ENCODE measurements at regions of chr22 and their contacts with region 1.

Region 1: DNA sequence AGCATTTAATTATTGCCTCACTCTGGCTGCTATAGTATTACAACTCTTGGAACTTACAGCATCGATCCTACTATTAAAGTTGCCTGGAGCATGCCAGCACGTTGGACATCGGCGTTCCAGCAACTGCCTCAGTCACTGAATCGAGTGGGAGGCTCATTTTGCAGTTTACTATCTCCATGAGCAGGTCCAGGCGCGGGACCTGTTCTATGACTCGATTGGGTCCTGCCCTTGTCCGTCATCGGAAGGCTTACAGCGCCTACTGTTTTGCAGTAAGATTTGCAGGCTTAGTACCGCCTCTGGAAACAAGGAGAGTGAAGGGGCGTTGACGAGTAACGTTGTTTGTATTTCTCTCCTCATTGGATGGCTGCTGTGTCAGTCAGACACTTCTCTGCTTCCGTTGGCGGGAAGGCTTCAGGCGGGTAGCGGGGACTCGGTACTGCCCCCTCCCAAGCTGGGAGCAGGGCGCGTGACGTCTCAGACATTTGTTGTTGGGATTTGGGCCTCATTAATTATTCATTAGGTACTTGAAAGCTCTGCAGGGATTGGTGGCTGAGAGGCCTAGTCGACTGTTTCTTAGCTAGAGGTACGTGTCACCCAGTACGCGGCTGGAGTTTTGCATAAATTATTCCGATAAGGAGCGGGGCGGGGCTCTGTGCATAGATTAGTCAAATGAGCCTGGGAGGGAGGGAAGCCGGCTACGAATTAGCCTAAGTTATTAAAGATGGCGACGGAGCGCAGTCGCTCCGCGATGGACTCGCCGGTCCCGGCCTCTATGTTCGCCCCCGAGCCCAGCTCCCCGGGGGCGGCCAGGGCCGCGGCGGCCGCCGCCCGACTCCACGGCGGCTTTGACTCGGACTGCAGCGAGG is at the start of gene GTPBP1:
- DNase-seq: peak; percentile 82
- ATAC-seq: peak; percentile 79
- H3K4me3 Mint-ChIP-seq: peak within 1 kb of the TSS; percentile 88
- H3K27ac Mint-ChIP-seq: peak within 1 kb of the TSS; percentile 85
- H3K4me1 Mint-ChIP-seq: peaks cover 69% of the 10 kb centered on the region
- H3K27me3 Mint-ChIP-seq: no peaks in the 10 kb centered on the region
- CTCF ChIP-seq: no peak
- total RNA-seq, gene GTPBP1: 90.6 and 103 TPM in 2 replicates

Region 2: DNA sequence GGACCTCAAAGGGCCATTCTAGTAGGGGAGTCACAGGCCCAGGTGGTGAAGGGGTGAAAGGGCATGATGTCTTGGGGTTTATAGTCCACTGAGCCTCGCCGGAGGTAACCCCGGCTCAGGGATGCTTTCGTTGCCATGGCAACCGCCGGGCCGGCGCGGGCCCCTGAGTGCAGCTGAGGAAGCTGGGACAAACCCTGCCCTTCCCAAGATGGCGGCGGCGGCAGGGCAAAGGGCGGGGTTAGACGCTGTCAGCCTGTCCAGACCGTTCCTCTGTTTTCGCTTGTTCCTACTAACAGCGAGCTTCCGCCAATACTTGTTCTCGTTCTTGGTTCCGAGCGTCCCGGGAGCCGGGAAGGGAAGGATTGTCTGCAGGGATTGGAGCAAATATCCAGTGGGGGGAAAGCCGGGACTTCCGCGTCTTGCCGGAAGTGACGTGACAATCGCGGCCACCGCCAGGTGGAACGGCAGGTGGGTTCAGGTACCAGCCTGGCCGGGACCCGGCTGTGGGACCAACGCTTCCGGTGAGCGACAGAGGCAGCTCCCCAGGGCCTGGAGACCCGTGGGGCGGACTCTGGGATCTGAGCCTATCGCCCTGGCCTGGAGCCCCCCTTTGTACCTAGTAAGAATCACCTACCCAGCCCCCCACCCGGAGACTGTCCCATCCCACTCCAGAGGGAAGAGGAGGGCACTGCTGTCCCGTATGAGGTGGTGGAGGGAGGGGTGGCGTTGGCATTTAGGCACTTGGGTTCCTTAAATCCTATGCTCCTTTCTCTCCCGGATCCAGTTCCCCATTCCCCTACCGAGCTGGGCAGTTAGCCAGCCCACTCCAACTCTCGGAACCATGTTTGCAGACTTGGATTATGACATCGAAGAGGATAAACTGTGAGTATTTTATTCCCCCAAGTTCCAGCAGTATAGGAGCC is 648.2 kb before region 1 on chr22 and contains the start of gene PICK1:
- CTCF ChIA-PET with region 1: interaction called, 3 read pairs
- POLR2A ChIA-PET with region 1: no interaction called
- intact Hi-C with region 1: loop called (anchors 1 kb)
- DNase-seq: peak; percentile 75
- ATAC-seq: peak; percentile 78
- H3K4me3 Mint-ChIP-seq: peak within 1 kb of the TSS; percentile 98
- H3K27ac Mint-ChIP-seq: peak within 1 kb of the TSS; percentile 97
- H3K4me1 Mint-ChIP-seq: peaks cover 19% of the 10 kb centered on the region
- H3K27me3 Mint-ChIP-seq: peaks cover 7% of the 10 kb centered on the region
- CTCF ChIP-seq: no peak
- total RNA-seq, gene PICK1: 21.5 and 25.5 TPM in 2 replicates

Region 3: DNA sequence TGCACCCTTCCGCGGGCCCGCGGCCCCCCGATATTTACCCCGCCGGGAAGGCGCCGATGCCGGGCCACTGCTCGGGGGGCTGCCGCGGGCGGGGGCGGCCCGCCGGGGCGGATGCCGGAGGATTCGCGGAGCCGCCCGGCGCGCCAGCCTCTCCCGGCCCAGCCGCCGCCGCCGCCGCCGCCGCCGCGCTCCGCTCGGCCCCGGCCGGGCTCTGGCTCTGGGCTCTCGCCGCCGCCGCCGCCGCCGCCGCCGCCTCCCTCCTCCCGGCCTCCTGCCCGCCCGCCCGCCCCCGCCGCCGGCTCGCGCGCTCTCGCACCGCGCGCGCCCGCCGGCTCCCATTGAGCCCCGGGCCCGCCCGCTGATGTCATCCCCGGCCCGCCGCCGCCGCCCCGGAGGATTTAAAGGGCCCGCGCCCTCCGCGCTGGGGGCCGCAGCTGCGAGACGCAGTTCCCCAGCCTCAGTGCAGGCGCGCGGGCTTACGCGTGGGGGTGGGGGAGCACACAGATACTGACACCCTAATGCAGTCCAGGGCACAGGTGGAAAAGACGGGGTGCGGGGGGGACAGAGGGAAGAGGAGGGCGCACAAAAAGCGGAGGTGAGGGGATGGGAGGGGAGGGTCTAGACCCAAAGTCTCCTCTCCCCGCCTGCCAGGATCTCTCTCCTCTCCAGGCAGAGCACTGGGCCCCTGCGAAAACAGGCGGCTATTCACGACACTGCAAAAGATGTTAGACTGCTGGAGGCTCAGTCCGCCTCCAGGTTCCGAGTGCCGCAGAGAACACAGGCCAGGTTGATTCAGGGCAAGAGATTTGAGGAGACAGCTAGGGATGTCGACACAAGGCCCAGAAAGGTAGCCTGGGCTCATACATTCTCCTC is 388.1 kb before region 1 on chr22 and contains the start of gene CSNK1E:
- CTCF ChIA-PET with region 1: no interaction called
- POLR2A ChIA-PET with region 1: no interaction called
- intact Hi-C with region 1: loop called (anchors 5 kb)
- DNase-seq: peak; percentile 72
- ATAC-seq: peak; percentile 58
- H3K4me3 Mint-ChIP-seq: peak within 1 kb of the TSS; percentile 82
- H3K27ac Mint-ChIP-seq: peak within 1 kb of the TSS; percentile 88
- H3K4me1 Mint-ChIP-seq: peaks cover 50% of the 10 kb centered on the region
- H3K27me3 Mint-ChIP-seq: no peaks in the 10 kb centered on the region
- CTCF ChIP-seq: no peak
- total RNA-seq, gene CSNK1E: 80.6 and 85.2 TPM in 2 replicates

Region 4: GRCh38 chr22:38506118-38506962 is 199.1 kb before region 1 on chr22 and contains the start of gene DDX17:
- CTCF ChIA-PET with region 1: no interaction called
- POLR2A ChIA-PET with region 1: no interaction called
- intact Hi-C with region 1: loop called (anchors 2 kb)
- DNase-seq: peak; percentile 91
- ATAC-seq: peak; percentile 89
- H3K4me3 Mint-ChIP-seq: peak within 1 kb of the TSS; percentile 99
- H3K27ac Mint-ChIP-seq: peak within 1 kb of the TSS; percentile 100
- H3K4me1 Mint-ChIP-seq: peaks cover 41% of the 10 kb centered on the region
- H3K27me3 Mint-ChIP-seq: no peaks in the 10 kb centered on the region
- CTCF ChIP-seq: no peak
- total RNA-seq, gene DDX17: 533 and 612 TPM in 2 replicates

Region 5: DNA sequence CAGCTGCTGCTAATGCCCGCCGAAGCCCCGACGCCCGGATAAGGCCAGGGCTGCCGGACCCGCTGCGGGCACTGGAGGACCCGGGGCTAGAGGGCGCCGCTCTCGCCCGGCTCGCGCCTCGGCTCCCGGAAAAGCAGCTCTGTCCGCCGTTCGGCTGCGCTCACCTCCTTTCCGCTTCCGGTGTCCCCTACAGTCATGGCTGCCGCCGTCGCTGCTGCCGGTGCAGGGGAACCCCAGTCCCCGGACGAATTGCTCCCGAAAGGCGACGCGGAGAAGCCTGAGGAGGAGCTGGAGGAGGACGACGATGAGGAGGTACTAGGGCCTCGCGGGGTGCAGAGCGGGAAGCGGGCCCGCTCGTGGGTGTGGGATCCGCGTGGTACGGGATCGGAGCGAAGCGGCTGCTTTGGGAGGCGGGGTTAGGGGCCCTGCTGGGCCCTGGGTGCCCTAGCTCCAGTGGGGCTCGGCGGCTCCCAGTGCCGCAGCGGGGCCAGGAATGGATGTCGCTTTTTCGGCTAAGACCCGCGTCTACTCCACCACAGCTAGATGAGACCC is 23.6 kb before region 1 on chr22 and contains the start of gene TOMM22:
- CTCF ChIA-PET with region 1: interaction called, 19 read pairs
- POLR2A ChIA-PET with region 1: interaction called, 23 read pairs
- intact Hi-C with region 1: loop called (anchors 1 kb)
- DNase-seq: peak; percentile 84
- ATAC-seq: peak; percentile 98
- H3K4me3 Mint-ChIP-seq: peak within 1 kb of the TSS; percentile 97
- H3K27ac Mint-ChIP-seq: peak within 1 kb of the TSS; percentile 92
- H3K4me1 Mint-ChIP-seq: peaks cover 20% of the 10 kb centered on the region
- H3K27me3 Mint-ChIP-seq: no peaks in the 10 kb centered on the region
- CTCF ChIP-seq: no peak
- total RNA-seq, gene TOMM22: 99.4 and 109 TPM in 2 replicates

Region 6: DNA sequence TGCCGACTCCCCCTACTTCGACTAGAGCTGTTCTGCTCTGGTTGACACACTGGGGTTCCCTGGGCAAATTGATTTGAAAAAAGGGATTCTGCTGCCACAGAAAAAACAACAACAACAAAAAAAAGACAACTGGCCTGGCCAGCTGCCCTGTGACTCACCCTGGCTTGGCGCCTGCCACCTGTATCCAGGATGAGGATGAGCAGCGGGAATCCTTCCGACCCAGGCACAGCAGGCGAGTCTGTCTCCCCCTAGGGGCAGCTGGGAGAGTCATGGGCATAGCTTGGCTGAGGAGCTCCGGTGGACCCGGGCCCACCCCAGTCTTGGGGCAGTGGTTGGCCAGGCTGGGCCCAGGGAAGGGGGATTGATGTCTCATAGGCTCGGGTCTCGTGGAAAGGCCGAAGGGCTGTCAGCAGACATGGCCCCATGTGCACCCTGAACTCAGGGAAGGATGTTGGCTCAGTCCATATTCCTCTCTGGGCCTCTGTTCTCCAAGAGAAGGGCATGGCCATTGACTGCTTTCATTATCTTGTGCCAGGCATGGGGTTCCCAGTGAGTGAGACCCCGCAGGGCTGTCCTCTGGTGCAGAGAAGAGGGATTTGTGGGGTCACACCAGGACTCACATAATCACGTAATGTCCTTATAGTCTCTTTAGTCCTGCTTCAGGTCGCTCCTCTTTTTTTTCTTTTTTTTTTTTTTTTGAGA is 60.8 kb after region 1 on chr22:
- CTCF ChIA-PET with region 1: no interaction called
- POLR2A ChIA-PET with region 1: no interaction called
- intact Hi-C with region 1: no loop called
- DNase-seq: peak; percentile 29
- ATAC-seq: peak; percentile 55
- H3K4me3 Mint-ChIP-seq: no peak overlapping the region
- H3K27ac Mint-ChIP-seq: no peak overlapping the region
- H3K4me1 Mint-ChIP-seq: peaks cover 2% of the 10 kb centered on the region
- H3K27me3 Mint-ChIP-seq: no peaks in the 10 kb centered on the region
- CTCF ChIP-seq: no peak

Region 7: DNA sequence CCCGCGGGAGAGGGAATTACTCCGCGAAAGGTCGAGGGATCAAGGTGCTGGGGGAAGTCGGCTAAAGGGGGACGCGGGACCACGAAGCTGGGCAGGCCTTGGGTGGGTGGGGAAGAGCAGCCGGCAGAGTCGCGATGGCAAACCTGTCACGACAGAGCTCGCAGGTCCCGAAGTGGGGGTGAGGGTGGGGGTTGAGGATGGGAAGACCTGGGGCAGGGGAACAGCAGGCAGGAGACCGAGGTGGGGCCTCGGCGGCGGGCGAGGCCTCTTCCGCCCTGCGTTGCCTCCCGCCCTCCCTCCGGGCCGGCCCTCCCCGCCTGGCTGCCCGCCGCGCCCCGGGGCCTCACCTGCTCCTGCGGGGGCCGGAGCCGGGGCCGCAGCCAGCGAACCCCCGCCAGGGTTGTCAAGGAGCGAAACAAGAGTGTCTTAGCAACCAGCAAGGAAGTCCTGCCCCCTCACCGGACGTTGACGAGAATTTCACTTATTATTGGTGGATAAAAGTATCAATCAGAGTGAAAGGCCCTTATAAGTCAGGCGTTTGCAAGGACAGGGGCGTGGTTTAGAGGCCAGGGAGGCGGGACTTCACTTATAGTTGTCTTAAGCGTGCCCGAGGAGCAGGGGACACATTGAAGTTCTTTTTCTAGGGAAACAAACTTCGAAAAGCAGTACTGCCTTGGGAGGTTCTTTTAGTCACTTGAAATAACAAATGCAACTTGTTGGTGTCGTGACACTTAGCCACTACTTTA is 88.4 kb after region 1 on chr22 and contains the start of gene DNAL4:
- CTCF ChIA-PET with region 1: no interaction called
- POLR2A ChIA-PET with region 1: no interaction called
- intact Hi-C with region 1: loop called (anchors 5 kb)
- DNase-seq: peak; percentile 78
- ATAC-seq: peak; percentile 99
- H3K4me3 Mint-ChIP-seq: peak within 1 kb of the TSS; percentile 87
- H3K27ac Mint-ChIP-seq: peak within 1 kb of the TSS; percentile 87
- H3K4me1 Mint-ChIP-seq: peaks cover 14% of the 10 kb centered on the region
- H3K27me3 Mint-ChIP-seq: peaks cover 17% of the 10 kb centered on the region
- CTCF ChIP-seq: no peak
- total RNA-seq, gene DNAL4: 7.7 and 8.4 TPM in 2 replicates

Region 8: DNA sequence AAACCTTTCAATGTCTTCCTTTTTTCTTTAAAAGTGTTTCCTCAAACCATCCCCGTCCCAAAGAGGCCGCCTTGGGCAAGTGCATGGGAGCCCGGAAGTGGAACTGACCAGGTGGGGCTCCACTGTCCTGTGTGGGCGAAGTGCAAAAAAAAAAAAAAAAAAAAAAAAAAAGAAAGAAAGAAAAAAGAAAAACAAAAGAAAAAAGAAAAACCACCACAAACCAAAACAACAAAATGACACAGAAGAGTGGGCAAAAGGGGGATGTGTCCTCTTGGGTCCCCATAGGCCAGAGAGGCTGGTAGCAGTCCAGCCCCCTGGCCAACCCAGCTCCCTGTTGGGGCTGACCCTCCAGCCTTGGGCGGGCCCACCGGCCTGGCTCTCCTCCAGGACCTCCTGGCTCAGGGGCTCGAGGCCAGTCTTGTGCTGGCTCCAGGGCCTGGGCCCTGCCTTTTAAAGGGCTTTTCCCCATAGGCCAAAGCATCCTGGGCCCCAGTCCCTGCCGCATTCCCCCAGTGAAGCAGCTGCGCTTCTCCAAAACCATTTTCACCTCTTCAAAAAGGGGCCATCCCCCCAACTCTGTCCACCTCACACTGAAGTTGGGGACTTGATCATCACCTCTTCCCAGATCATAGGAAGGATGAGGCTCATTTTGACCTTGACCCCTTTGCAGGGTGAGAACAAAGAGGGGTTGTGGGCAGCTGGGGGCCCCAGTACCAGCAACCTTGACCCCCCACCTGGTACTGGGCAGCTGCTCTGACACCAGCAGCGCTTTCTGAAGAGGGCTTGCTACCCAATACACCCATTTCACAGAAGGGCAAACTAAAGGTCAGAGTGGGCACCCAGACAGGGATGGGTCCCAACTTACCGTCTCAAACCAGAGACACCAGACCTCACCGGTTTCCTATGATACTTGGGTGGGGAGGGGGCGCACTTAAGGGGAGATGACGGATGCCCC is 157.2 kb after region 1 on chr22:
- CTCF ChIA-PET with region 1: no interaction called
- POLR2A ChIA-PET with region 1: no interaction called
- intact Hi-C with region 1: no loop called
- DNase-seq: no peak
- ATAC-seq: peak; percentile 34
- H3K4me3 Mint-ChIP-seq: no peak overlapping the region
- H3K27ac Mint-ChIP-seq: no peak overlapping the region
- H3K4me1 Mint-ChIP-seq: no peaks in the 10 kb centered on the region
- H3K27me3 Mint-ChIP-seq: peaks cover 5% of the 10 kb centered on the region
- CTCF ChIP-seq: no peak

Region 9: DNA sequence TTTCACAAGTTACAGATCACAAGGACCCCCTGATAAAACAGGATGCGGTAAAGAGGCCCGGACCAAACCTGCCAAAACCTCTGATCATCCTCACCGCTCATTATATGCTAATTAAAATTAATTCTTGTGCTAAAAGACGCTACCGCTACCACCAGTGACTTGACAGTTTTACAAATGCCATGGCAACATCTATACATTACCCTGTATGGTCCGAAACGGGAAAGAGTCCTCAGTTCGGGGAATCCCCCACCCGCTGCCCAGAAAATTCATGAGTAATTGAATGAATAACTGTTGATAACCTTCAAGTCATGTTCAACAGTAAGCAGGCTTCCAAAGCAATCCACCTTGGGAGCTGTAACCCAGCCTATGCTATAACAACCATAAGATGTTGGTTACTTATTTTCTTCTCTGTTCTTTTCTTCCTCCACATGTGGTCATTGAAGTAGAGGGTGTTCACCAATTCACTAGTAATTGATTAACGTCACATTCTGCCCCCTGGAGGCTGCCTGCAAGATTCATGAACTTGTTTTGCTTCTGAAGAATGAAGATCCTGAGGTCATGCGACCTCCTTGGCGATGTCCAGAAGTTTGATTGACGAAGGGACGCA is 412.2 kb after region 1 on chr22:
- CTCF ChIA-PET with region 1: no interaction called
- POLR2A ChIA-PET with region 1: interaction called, 10 read pairs
- intact Hi-C with region 1: no loop called
- DNase-seq: peak; percentile 37
- ATAC-seq: peak; percentile 64
- H3K4me3 Mint-ChIP-seq: peak overlapping the region; percentile 67
- H3K27ac Mint-ChIP-seq: peak overlapping the region; percentile 86
- H3K4me1 Mint-ChIP-seq: peaks cover 52% of the 10 kb centered on the region
- H3K27me3 Mint-ChIP-seq: no peaks in the 10 kb centered on the region
- CTCF ChIP-seq: no peak

Measured in activated B cell treated with CpG ODN at 0.5 μM for 24 hours (primary cell).